AG04450 (cell line): ENCODE measurements at regions of chr11 and their contacts with region 1.

Region 1: GRCh38 chr11:66159324-66159984 is 89.4 kb downstream of the PACS1 start:
- DNase-seq: no peak
- H3K4me3 ChIP-seq: no peak overlapping the region
- H3K27ac ChIP-seq: no peak overlapping the region
- H3K27me3 ChIP-seq: no peaks in the 10 kb centered on the region
- CTCF ChIP-seq: no peak

Region 2: DNA sequence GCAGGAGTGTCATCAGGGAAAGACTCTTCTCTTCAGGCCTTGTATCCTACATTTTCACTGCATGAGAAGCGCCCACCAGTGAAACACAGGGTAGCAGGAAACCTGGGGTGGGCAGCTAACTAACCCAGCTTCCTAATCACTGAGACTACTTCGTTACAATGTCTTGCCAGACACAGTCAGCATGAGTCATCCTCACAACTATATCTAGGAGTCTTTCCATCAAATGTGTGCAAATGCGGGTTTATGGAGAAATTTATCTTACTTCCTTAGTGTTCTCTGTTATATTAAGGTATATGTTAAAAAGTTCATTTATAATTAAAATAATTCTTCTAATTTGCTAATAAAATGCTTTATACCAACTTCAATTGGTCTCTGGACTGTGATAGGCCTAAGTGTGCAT is 29.1 kb after region 1 on chr11:
- CTCF ChIA-PET with region 1: no interaction called
- POLR2A ChIA-PET with region 1: interaction called, 16 read pairs
- DNase-seq: peak; percentile 10
- H3K4me3 ChIP-seq: no peak overlapping the region
- H3K27ac ChIP-seq: no peak overlapping the region
- H3K27me3 ChIP-seq: no peaks in the 10 kb centered on the region
- CTCF ChIP-seq: no peak